ENCODE measurements at regions of chr10 and their contacts with region 1.

Region 1: DNA sequence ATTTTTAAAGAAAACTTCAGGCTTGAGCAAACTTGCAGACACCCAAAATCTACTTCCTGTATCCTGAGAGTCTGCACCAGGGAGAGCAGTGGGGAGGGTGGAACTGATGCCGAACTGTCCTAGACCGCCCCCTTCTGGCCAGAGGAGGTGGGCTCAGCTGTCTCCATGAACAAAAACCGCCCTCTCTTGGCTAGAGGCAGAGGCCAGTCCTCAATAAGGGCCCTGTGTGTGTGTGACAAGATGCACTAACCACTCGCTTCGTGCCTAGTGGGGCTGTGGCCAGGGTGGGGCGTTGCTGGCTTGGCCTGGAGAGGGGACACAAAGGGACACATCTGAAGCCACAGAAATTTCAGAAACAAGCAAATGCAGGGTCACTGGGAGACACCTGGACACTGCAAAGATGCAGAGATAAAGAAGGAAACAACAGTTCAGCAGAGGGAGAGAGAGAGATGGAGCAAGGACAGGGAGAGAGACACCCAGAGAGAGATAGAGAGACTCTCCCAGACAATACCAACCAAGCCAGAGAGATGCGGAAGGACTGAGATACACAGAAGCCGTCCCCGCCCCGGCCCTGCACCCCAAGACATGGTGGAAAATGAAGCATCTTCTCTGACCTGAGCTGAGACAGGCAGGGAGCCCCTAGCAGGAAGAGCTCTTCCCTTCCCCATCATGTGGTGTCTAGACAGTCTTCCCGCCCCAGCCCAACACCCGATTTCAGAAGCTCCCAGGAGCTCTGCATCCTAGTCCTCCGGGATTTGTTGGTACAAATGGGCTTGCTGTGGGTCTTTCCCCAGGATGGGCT is 22.7 kb upstream of the FXYD4 start:
- DNase-seq: peak; percentile 91
- H3K4me3 Mint-ChIP-seq: no peak overlapping the region
- H3K27ac Mint-ChIP-seq: peak overlapping the region; percentile 64
- H3K4me1 Mint-ChIP-seq: peaks cover 51% of the 10 kb centered on the region
- H3K27me3 Mint-ChIP-seq: peaks cover 14% of the 10 kb centered on the region

Region 2: GRCh38 chr10:43255634-43256431 is 92.9 kb before region 1 on chr10:
- CTCF ChIA-PET with region 1: interaction called, 10 read pairs
- POLR2A ChIA-PET with region 1: no interaction called
- DNase-seq: peak; percentile 60
- H3K4me3 Mint-ChIP-seq: no peak overlapping the region
- H3K27ac Mint-ChIP-seq: peak overlapping the region; percentile 35
- H3K4me1 Mint-ChIP-seq: peaks cover 6% of the 10 kb centered on the region
- H3K27me3 Mint-ChIP-seq: peaks cover 1% of the 10 kb centered on the region

Region 3: GRCh38 chr10:43287056-43288007 is 61.4 kb before region 1 on chr10:
- CTCF ChIA-PET with region 1: interaction called, 105 read pairs
- POLR2A ChIA-PET with region 1: interaction called, 19 read pairs
- DNase-seq: peak; percentile 86
- H3K4me3 Mint-ChIP-seq: peak overlapping the region; percentile 26
- H3K27ac Mint-ChIP-seq: peak overlapping the region; percentile 88
- H3K4me1 Mint-ChIP-seq: peaks cover 58% of the 10 kb centered on the region
- H3K27me3 Mint-ChIP-seq: peaks cover 9% of the 10 kb centered on the region

Region 4: GRCh38 chr10:43361986-43362839 is 13.5 kb after region 1 on chr10:
- CTCF ChIA-PET with region 1: interaction called, 12 read pairs
- POLR2A ChIA-PET with region 1: interaction called, 3 read pairs
- DNase-seq: peak; percentile 99
- H3K4me3 Mint-ChIP-seq: peak overlapping the region; percentile 91
- H3K27ac Mint-ChIP-seq: peak overlapping the region; percentile 88
- H3K4me1 Mint-ChIP-seq: peaks cover 37% of the 10 kb centered on the region
- H3K27me3 Mint-ChIP-seq: no peaks in the 10 kb centered on the region

Region 5: GRCh38 chr10:43444897-43445466 is 96.3 kb after region 1 on chr10:
- CTCF ChIA-PET with region 1: no interaction called
- POLR2A ChIA-PET with region 1: no interaction called
- DNase-seq: no peak
- H3K4me3 Mint-ChIP-seq: no peak overlapping the region
- H3K27ac Mint-ChIP-seq: peak overlapping the region; percentile 67
- H3K4me1 Mint-ChIP-seq: peaks cover 17% of the 10 kb centered on the region
- H3K27me3 Mint-ChIP-seq: no peaks in the 10 kb centered on the region

Measured in activated CD4-positive, alpha-beta memory T cell treated with anti-CD3 and anti-CD28 coated beads, Interleukin-2, amount 10 ng/mL, durations not matched to agents 7 days and 5 days (primary cell).